ENCODE measurements at regions of chr11 and their contacts with region 1.

Region 1: GRCh38 chr11:45665206-45665932 is at the start of gene CHST1:
- DNase-seq: peak in 1 of 2 donors; percentile 85
- H3K4me3 ChIP-seq: peak within 1 kb of the TSS; percentile 62 to 78
- H3K27ac ChIP-seq: peak within 1 kb of the TSS; percentile 64 to 79
- H3K4me1 ChIP-seq: peaks cover 0 to 27% of the 10 kb centered on the region in 2 donors
- H3K27me3 ChIP-seq: no peaks in the 10 kb centered on the region
- CTCF ChIP-seq: no peak
- total RNA-seq, gene CHST1: 40.2 TPM

Region 2: GRCh38 chr11:45097721-45098493 is 567.5 kb before region 1 on chr11:
- intact Hi-C with region 1: loop called (anchors 10 kb)
- DNase-seq: peak; percentile 29 to 82
- H3K4me3 ChIP-seq: no peak overlapping the region
- H3K27ac ChIP-seq: no peak overlapping the region
- H3K4me1 ChIP-seq: peaks cover 3 to 6% of the 10 kb centered on the region in 2 donors
- H3K27me3 ChIP-seq: peaks cover 5% of the 10 kb centered on the region
- CTCF ChIP-seq: no peak

Region 3: GRCh38 chr11:45147017-45147728 is 518.2 kb before region 1 on chr11:
- intact Hi-C with region 1: loop called (anchors 10 kb)
- DNase-seq: peak; percentile 89 to 98
- H3K4me3 ChIP-seq: peak overlapping the region; percentile 79 to 91
- H3K27ac ChIP-seq: peak overlapping the region; percentile 74 to 95
- H3K4me1 ChIP-seq: peaks cover 8 to 17% of the 10 kb centered on the region in 2 donors
- H3K27me3 ChIP-seq: no peaks in the 10 kb centered on the region
- CTCF ChIP-seq: no peak

Region 4: DNA sequence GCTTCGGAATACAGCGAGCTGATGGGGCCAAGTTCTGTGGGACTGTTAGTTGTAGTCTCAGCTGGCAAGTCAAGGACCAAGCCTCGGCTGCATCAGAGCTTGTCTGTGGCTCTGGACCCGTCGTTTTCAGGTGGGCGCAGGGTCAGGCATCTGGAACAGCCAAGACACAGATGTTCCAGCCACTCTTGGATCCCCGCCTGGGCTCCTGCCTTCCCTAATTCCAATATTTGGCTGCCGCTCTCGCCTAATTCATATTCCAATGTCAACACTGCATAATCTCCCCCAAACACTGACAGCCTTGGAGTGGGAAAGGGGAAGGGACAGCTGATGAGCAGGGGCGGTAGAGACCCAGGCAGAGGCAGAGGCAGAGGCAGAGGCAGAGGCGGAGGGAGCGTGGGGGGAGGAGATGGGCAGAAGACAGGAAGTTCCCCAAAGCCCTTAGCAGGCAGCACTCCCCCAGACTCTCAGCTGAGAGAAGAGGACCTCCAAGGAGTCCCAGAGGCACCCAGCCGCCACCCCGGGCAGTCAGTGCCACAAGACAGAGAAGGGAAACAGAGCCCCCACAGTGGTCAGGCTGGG is 90.0 kb after region 1 on chr11:
- intact Hi-C with region 1: loop called (anchors 5 kb)
- DNase-seq: no peak
- H3K4me3 ChIP-seq: no peak overlapping the region
- H3K27ac ChIP-seq: peak overlapping the region; percentile 85 to 89
- H3K4me1 ChIP-seq: peaks cover 9 to 59% of the 10 kb centered on the region in 2 donors
- H3K27me3 ChIP-seq: no peaks in the 10 kb centered on the region
- CTCF ChIP-seq: no peak

Region 5: DNA sequence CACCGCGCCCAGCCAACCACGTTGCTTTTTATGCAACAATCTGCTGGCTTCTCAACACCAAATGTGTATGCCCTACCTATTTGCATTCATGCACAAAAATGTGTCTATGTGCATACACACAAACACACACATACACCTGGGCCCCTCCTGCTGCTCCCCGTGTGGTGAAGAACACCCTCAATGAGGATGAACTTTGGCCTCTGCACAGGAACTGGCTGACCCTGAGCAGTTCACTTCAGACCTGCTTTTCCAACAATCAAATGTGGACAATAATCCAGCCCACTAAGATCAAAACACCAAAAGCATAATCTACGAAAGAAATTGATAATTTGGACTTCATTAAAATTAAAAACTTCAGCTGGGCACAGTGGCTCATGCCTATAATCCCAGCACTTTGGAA is 114.2 kb after region 1 on chr11:
- intact Hi-C with region 1: no loop called
- DNase-seq: peak in 1 of 2 donors; percentile 38
- H3K4me3 ChIP-seq: no peak overlapping the region
- H3K27ac ChIP-seq: no peak overlapping the region
- H3K4me1 ChIP-seq: no peaks in the 10 kb centered on the region
- H3K27me3 ChIP-seq: no peaks in the 10 kb centered on the region
- CTCF ChIP-seq: no peak

Region 6: DNA sequence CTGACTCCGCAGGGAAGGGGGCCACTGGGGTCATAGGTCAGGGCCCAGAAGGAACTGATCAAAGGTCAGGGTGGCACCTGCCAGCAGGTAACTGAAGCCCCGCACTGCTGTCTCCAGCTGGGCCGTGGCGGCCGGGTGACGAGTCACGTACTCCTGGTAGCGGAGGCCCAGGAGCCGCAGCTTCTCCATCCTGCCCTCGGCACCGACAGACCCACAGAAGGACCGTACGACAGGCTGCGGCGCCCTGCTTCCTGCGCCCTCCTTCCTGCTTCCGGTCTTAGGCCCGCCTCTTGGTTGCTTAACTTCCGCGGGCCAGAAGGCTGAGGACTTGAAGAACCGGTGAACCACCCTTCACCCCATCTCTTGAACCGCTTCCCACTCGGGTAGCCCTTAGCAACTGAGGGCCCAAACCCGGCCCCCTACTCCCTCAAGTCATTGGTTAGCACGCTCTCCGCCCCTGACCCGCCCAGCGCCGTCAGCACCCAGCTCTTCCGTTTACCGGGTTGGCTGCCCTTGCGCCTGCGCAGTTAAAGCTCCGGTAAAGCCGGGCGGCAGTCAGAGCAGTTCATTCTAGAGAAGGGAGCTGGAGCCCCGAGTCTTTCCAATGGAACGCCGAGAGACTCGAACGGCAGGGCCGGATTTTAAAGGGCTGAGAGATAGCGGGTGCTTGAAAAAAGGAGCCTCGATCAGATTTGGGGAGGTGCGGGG is 252.4 kb after region 1 on chr11 and contains the start of gene PEX16:
- intact Hi-C with region 1: loop called (anchors 5 kb)
- DNase-seq: peak; percentile 93 to 99
- H3K4me3 ChIP-seq: peak within 1 kb of the TSS; percentile 67 to 91
- H3K27ac ChIP-seq: peak within 1 kb of the TSS; percentile 90 to 91
- H3K4me1 ChIP-seq: peaks cover 5 to 18% of the 10 kb centered on the region in 2 donors
- H3K27me3 ChIP-seq: peaks cover 11% of the 10 kb centered on the region
- CTCF ChIP-seq: no peak
- total RNA-seq, gene PEX16: 77.9 TPM